PC-9 (cell line): ENCODE measurements at regions of chr12 and their contacts with region 1.

Region 1: DNA sequence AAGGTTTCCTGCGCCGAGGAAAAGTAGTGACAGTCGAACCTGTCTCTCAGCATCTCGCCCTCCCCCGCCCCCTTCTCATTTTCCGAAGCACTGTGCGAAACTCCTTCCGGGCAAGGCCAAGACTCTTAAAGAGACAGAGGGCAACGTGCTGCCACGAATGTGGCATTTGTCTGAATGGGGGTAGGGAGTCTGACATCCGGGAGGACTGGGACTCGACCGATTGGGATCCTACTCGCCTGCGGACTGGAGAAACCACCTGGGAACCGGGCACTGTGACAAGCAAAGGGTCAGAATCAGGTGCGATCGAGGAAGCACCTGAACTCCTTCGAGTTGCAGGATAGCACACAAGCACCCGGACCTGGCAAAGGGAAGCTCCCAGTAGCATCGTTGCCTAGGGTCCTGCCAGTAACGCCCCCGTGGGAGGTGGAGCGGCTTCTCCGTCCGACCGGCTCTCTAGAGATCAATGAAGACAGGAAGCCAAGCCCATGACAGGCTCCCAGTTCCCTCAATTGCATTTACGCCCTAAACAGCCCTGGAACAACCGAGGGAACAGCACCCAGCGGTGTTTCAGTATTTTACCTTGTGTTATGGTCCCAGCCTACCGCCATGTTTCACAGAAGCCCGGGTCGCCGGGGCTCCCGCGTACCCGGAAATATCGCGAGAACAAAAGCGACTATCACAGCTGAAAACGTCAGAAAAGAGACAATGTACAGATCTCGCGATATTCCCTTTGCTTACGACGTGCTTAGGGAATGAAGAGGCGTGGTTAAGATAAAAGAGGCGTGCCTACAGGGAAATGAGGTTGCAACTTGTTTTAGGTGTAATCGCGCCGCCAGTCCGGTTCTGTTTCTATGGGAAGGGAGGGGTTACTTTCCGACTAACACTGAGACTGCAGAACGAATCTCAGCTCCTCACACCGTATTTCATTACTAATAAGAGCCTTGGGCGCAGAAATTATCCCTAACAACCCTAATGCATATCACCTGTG is at the start of gene ERGIC2:
- DNase-seq: peak; percentile 94 to 97
- H3K4me3 ChIP-seq: peak within 1 kb of the TSS; percentile 81
- H3K27ac ChIP-seq: peak within 1 kb of the TSS; percentile 91
- H3K4me1 ChIP-seq: peaks cover 18% of the 10 kb centered on the region
- H3K27me3 ChIP-seq: no peaks in the 10 kb centered on the region
- CTCF ChIP-seq: no peak
- total RNA-seq, gene ERGIC2: 95.5 and 141 TPM in 2 replicates

Region 2: GRCh38 chr12:29148911-29149690 is 231.7 kb before region 1 on chr12 and contains the start of gene FAR2:
- CTCF ChIA-PET with region 1: no interaction called
- POLR2A ChIA-PET with region 1: interaction called, 10 read pairs
- intact Hi-C with region 1: loop called (anchors 5 kb)
- DNase-seq: peak; percentile 39 to 70
- H3K4me3 ChIP-seq: peak within 1 kb of the TSS; percentile 72
- H3K27ac ChIP-seq: peak within 1 kb of the TSS; percentile 58
- H3K4me1 ChIP-seq: peaks cover 14% of the 10 kb centered on the region
- H3K27me3 ChIP-seq: no peaks in the 10 kb centered on the region
- CTCF ChIP-seq: no peak
- total RNA-seq, gene FAR2: 11.0 and 12.3 TPM in 2 replicates

Region 3: DNA sequence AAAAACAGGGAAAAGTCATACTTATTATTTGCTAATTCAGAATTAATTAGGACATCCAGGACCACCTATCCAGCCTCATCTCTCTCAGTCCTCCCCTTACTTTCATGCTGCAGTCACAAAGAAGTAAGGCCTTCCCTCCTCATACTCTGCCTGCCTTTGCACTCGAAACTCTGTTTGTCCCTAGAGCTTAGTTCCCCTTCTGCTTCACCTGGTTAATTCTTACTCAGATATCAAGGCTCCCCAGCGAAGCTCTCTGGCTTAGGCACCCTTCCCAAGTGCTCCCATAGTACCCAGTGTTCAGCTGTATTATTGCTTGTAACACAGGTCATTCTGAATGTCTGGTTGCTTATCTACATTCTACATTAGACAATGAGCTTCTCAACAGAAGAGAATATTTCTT is 81.2 kb before region 1 on chr12:
- CTCF ChIA-PET with region 1: no interaction called
- POLR2A ChIA-PET with region 1: no interaction called
- intact Hi-C with region 1: no loop called
- DNase-seq: no peak
- H3K4me3 ChIP-seq: no peak overlapping the region
- H3K27ac ChIP-seq: no peak overlapping the region
- H3K4me1 ChIP-seq: no peaks in the 10 kb centered on the region
- H3K27me3 ChIP-seq: no peaks in the 10 kb centered on the region
- CTCF ChIP-seq: no peak

Region 4: DNA sequence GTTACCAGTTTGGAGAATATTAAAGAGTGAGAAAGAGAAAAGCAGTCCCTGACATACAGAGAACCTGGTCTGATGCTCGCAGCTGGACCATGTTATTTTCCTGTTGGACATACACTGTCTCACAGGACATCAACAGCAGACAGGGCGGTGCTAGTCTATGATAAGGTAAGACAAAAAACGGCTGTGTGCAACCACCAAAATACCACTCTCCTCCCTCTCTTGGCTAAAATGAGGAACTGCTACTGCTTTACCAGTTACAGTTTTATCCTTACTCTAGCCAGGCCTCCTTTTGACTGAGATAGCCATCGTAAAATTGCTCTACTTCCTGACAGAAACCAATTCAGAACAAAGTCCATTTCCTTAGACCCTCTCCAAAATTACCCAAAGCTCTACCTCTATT is 47.1 kb after region 1 on chr12:
- CTCF ChIA-PET with region 1: no interaction called
- POLR2A ChIA-PET with region 1: no interaction called
- intact Hi-C with region 1: loop called (anchors 1 kb)
- DNase-seq: no peak
- H3K4me3 ChIP-seq: no peak overlapping the region
- H3K27ac ChIP-seq: peak overlapping the region; percentile 66; the same call in 1 of the 2 replicates
- H3K4me1 ChIP-seq: peaks cover 19% of the 10 kb centered on the region
- H3K27me3 ChIP-seq: no peaks in the 10 kb centered on the region
- CTCF ChIP-seq: no peak

Region 5: DNA sequence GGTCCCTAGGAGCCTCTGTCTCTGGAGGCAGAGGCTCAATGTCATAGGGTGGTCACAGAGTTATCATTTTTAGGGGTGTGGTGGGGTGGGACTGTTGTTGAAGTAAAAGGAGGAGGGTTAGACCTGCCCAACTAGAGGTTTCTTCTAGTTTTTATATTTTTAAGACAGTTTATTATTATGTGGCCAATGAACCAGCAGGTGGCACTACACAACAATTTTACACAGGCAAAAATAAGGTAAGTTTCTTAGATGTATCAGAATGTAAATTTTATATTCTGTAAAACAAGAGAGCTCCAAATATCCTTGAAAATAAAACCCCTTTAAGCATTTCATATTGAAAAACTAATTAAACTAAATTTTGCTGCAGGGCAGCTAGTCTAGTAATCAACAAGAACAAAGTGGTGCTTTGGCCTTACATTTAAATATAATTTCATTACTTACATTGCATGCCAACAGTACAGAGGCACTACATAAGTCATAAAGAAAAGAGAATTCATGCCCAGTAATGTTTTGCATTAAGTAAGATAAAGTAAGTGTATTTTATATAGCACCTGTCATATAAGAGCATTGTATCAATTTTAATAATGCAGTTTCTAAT is 138.9 kb after region 1 on chr12:
- CTCF ChIA-PET with region 1: no interaction called
- POLR2A ChIA-PET with region 1: no interaction called
- intact Hi-C with region 1: loop called (anchors 10 kb)
- DNase-seq: peak in 1 of 2 experiments; percentile 24
- H3K4me3 ChIP-seq: no peak overlapping the region
- H3K27ac ChIP-seq: no peak overlapping the region
- H3K4me1 ChIP-seq: no peaks in the 10 kb centered on the region
- H3K27me3 ChIP-seq: no peaks in the 10 kb centered on the region
- CTCF ChIP-seq: peak; percentile 84

Region 6: DNA sequence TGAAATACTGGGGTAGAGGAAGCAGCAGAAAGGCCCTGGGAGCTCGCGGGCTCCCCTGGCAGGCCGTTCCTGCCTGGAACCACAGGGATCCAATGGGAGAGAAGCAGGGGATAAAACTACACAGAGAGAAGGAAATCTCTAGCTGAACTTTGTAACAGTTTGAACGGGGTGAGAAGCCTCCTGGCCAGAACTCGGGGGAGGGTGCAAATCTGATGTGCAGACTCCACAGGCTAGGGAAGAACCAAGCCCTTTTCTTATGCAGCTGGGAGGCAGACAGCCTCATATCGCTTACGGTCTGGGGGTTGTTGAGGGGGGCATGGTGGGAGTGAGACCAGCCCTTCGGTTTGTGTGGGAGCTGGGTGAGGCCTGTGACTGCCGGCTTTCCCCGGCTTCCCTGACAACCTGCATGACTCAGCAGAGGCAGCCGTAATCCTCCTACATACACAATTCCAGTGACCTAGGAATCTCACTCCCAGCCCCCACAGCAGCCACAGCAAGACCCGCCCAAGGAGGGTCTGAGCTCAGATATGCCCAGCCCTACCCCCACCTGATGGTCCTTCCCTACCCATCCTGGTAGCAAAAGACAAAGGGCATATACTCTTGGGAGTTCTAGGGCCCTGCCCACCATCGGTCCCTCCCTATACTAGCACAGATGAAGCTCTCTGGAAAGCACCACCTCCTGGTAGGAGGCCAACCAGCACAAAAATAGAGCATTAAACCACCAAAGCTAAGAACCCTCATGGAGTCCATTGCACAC is 259.9 kb after region 1 on chr12:
- CTCF ChIA-PET with region 1: no interaction called
- POLR2A ChIA-PET with region 1: interaction called, 3 read pairs
- intact Hi-C with region 1: loop called (anchors 2 kb)
- DNase-seq: peak; percentile 71 to 73
- H3K4me3 ChIP-seq: peak overlapping the region; percentile 48; the same call in 1 of the 2 replicates
- H3K27ac ChIP-seq: peak overlapping the region; percentile 87
- H3K4me1 ChIP-seq: peaks cover 19% of the 10 kb centered on the region
- H3K27me3 ChIP-seq: no peaks in the 10 kb centered on the region
- CTCF ChIP-seq: no peak; the same call in 1 of the 2 replicates

Region 7: GRCh38 chr12:30754709-30755394 is 1374.0 kb after region 1 on chr12 and contains the start of gene CAPRIN2:
- CTCF ChIA-PET with region 1: no interaction called
- POLR2A ChIA-PET with region 1: no interaction called
- intact Hi-C with region 1: loop called (anchors 2 kb)
- DNase-seq: peak; percentile 86 to 100
- H3K4me3 ChIP-seq: peak within 1 kb of the TSS; percentile 74
- H3K27ac ChIP-seq: peak within 1 kb of the TSS; percentile 70
- H3K4me1 ChIP-seq: peaks cover 46% of the 10 kb centered on the region
- H3K27me3 ChIP-seq: no peaks in the 10 kb centered on the region
- CTCF ChIP-seq: peak; percentile 41; the same call in 1 of the 2 replicates
- total RNA-seq, gene CAPRIN2: 27.4 and 29.5 TPM in 2 replicates